Activated CD4-positive, alpha-beta memory T cell treated with anti-CD3 and anti-CD28 coated beads, Interleukin-2, amount 10 ng/mL, durations not matched to agents 7 days and 5 days (primary cell): ENCODE measurements at regions of chr7 and their contacts with region 1.

Region 1: DNA sequence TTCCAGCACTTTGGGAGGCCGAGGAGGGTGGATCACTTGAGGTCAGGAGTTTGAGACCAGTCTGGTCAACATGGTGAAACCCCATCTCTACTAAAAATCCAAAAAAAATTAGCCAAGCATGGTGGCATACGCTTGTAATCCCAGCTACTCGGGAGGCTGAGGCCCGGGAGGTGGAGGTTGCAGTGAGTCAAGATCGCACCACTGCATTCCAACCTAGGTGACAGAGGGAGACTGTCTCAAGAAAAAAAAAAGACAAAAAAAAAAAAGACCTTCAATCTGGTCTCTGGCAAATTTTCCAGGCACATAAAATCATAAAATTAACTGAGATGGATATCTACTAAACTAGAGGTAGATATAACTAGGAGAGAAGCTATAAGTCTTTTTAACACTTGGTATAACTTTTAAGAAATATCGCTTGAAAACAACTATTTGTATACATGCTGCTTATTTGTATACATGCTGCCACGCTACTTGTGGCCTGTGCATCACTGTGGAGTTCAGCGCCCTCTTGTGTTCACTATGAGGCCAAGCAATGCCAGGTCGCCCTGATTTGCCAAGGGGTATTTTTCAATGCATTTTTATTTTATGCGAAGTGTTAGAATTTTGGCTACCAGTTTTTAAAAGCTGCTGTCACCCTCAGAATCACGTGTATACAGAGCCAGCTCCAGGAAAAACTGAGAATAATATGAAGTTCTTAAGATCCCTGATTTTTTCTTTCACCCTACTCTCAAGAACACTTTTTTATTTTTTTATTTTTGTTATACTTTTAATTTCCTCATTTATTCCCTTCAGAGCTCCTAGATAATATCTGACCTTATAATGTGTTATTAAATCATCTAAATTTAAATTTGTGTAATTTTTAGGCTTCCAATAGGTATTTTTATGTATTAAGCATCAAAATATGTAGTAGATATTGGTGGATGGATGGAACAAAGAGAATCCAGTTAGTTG is 26.7 kb downstream of the CYCS start:
- DNase-seq: peak; percentile 73
- H3K4me3 Mint-ChIP-seq: no peak overlapping the region
- H3K27ac Mint-ChIP-seq: no peak overlapping the region
- H3K4me1 Mint-ChIP-seq: peaks cover 10% of the 10 kb centered on the region
- H3K27me3 Mint-ChIP-seq: peaks cover 12% of the 10 kb centered on the region

Region 2: DNA sequence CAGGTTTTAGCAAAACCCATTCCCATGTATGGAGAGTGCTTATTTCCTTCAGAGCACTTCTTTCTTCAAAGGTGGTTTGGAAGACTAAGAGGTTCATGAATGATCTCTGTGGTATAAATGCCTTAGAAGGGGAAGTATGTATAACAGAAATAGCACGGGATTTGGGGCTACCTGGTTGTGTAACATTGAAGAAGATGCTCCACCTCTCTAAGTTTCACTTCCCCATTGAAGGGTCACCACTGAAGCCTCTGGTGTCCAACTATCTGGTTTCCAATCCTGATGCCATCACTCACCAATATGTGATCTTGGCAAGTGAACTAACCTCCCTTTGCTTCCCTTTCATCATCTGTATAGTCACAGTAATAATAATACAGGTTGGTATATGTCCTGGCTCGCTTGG is 10.5 kb before region 1 on chr7:
- CTCF ChIA-PET with region 1: interaction called, 25 read pairs
- POLR2A ChIA-PET with region 1: no interaction called
- DNase-seq: no peak
- H3K4me3 Mint-ChIP-seq: no peak overlapping the region
- H3K27ac Mint-ChIP-seq: no peak overlapping the region
- H3K4me1 Mint-ChIP-seq: no peaks in the 10 kb centered on the region
- H3K27me3 Mint-ChIP-seq: no peaks in the 10 kb centered on the region

Region 3: DNA sequence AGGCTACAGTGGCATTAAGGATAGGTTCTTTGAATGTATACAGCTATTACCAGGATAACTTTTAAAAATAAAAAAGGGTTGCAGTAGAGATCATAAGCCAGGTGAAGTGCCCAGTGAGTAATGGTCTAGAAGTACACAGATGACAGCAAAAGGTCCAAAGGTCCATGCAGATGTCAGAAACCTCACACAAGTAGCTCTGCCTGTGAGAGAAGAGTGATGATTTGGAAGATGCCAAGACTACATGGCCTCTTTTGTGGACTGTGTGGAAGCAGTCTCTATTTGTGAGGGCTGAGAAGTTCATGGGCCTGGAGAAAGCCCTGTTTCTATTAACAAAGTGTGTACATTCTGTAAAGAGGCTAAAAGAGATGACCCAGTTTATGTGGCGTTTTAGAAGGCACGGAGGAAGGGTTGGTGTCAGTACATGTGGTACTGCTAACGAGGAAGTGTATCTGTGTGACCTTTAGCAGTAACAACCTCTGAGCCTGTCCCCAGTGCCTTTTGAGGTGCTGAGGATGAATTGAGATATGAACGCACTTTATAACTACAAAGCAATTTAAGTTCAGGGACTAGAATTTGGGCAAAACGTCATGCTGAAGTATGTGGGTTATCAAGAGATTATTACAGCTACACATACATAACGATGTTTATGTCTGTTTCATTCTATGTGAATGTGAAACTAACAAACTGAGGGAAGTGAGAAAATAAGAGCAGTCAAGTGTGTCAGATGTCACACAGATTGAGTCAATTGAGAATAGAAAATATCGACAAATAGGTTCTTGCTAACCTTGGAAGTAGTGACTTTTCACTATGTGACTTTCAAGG is 19.1 kb after region 1 on chr7:
- CTCF ChIA-PET with region 1: interaction called, 24 read pairs
- POLR2A ChIA-PET with region 1: interaction called, 4 read pairs
- DNase-seq: no peak
- H3K4me3 Mint-ChIP-seq: no peak overlapping the region
- H3K27ac Mint-ChIP-seq: peak overlapping the region; percentile 17
- H3K4me1 Mint-ChIP-seq: peaks cover 36% of the 10 kb centered on the region
- H3K27me3 Mint-ChIP-seq: no peaks in the 10 kb centered on the region